Mammary epithelial cell (primary cell): ENCODE measurements at regions of chr15 and their contacts with region 1.

Region 1: GRCh38 chr15:45714590-45715488 is 80.0 kb downstream of the SQOR start:
- DNase-seq: peak; percentile 43
- H3K4me3 ChIP-seq: no peak overlapping the region
- H3K27ac ChIP-seq: no peak overlapping the region
- H3K4me1 ChIP-seq: no peaks in the 10 kb centered on the region
- H3K27me3 ChIP-seq: no peaks in the 10 kb centered on the region
- CTCF ChIP-seq: peak; percentile 91 to 95

Region 2: DNA sequence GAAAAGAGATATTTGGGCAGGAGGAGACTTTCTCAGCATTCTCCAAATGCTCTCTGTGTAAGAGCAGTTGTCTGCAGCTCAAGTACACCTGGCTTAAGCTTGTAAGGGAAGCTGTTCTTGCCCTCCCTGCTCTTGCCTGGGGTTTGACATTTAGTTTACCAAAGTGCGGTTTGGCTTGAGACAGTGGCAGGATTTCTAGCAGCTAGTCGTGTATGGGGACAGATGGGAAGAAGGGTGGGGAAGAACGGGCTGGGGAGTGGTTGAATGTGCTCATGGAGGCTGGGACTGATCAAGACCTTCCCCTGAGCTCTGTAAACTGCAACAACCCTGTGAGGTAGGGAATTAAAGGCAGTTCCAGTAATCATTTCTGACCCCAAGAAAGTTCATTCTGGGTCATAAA is 40.2 kb before region 1 on chr15:
- CTCF ChIA-PET with region 1: no interaction called
- dilution Hi-C with region 1: no loop called
- in situ Hi-C with region 1: no loop called
- intact Hi-C with region 1: no loop called
- DNase-seq: no peak
- H3K4me3 ChIP-seq: no peak overlapping the region
- H3K27ac ChIP-seq: no peak overlapping the region
- H3K4me1 ChIP-seq: no peaks in the 10 kb centered on the region
- H3K27me3 ChIP-seq: no peaks in the 10 kb centered on the region
- CTCF ChIP-seq: no peak

Region 3: DNA sequence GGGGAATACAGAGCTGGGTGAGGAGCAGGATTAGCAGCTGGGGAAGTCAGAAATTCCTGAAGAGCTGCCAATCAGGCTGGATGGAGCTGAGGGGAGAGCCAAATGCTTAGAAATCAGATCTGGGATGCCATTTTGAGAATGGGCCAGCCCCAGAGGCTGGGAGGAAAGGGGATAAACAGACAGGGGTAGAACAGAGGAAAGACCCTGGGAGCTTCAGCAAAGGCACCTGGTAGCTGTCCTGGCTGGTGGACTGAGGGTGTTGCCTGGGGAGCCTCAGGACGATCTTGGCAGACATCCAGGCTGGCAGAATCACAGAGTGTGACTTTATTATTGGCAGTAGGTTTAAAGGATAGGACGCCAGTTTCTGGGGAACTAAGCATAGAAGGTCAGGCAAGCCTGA is 17.8 kb after region 1 on chr15:
- CTCF ChIA-PET with region 1: no interaction called
- dilution Hi-C with region 1: no loop called
- in situ Hi-C with region 1: no loop called
- intact Hi-C with region 1: no loop called
- DNase-seq: no peak
- H3K4me3 ChIP-seq: no peak overlapping the region
- H3K27ac ChIP-seq: no peak overlapping the region
- H3K4me1 ChIP-seq: peaks cover 3% of the 10 kb centered on the region
- H3K27me3 ChIP-seq: no peaks in the 10 kb centered on the region
- CTCF ChIP-seq: no peak

Region 4: DNA sequence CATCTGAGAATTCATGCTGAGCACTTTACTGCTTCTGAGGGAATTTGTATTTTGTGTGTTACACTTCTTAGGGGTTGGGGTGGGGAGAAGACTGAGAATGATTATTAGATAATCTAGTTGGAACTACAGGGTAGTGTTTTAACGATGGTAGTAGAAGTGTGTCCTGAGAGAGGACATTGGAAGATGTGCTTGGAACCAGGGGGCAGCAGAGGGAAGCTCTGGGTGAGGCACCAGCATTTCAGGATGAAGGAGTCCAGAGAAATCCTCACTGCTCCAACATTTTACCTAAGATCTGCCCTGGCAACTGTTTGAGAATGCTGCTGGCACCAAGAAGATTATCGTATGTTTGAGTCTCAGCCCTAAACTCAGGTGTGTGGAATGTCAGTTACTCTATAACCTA is 65.5 kb after region 1 on chr15:
- CTCF ChIA-PET with region 1: no interaction called
- dilution Hi-C with region 1: no loop called
- in situ Hi-C with region 1: loop called in 1 of 2 experiments (anchors 10 kb)
- intact Hi-C with region 1: no loop called
- DNase-seq: no peak
- H3K4me3 ChIP-seq: no peak overlapping the region
- H3K27ac ChIP-seq: no peak overlapping the region
- H3K4me1 ChIP-seq: no peaks in the 10 kb centered on the region
- H3K27me3 ChIP-seq: peaks cover 1% of the 10 kb centered on the region
- CTCF ChIP-seq: no peak

Region 5: GRCh38 chr15:45790325-45790943 is 75.6 kb after region 1 on chr15:
- CTCF ChIA-PET with region 1: interaction called, 3 read pairs
- dilution Hi-C with region 1: no loop called
- in situ Hi-C with region 1: loop called (anchors 5 to 10 kb)
- intact Hi-C with region 1: loop called (anchors 1 kb)
- DNase-seq: peak; percentile 6
- H3K4me3 ChIP-seq: no peak overlapping the region
- H3K27ac ChIP-seq: no peak overlapping the region
- H3K4me1 ChIP-seq: no peaks in the 10 kb centered on the region
- H3K27me3 ChIP-seq: no peaks in the 10 kb centered on the region
- CTCF ChIP-seq: peak; percentile 65 to 75

Region 6: GRCh38 chr15:46312133-46312740 is 597.4 kb after region 1 on chr15:
- CTCF ChIA-PET with region 1: no interaction called
- dilution Hi-C with region 1: no loop called
- in situ Hi-C with region 1: no loop called
- intact Hi-C with region 1: loop called (anchors 10 kb)
- DNase-seq: peak; percentile 27
- H3K4me3 ChIP-seq: no peak overlapping the region
- H3K27ac ChIP-seq: no peak overlapping the region
- H3K4me1 ChIP-seq: no peaks in the 10 kb centered on the region
- H3K27me3 ChIP-seq: no peaks in the 10 kb centered on the region
- CTCF ChIP-seq: peak; percentile 68 to 81